Cardiac septum (tissue), 1 donor: ENCODE measurements at regions of chr9 and their contacts with region 1.

Region 1: DNA sequence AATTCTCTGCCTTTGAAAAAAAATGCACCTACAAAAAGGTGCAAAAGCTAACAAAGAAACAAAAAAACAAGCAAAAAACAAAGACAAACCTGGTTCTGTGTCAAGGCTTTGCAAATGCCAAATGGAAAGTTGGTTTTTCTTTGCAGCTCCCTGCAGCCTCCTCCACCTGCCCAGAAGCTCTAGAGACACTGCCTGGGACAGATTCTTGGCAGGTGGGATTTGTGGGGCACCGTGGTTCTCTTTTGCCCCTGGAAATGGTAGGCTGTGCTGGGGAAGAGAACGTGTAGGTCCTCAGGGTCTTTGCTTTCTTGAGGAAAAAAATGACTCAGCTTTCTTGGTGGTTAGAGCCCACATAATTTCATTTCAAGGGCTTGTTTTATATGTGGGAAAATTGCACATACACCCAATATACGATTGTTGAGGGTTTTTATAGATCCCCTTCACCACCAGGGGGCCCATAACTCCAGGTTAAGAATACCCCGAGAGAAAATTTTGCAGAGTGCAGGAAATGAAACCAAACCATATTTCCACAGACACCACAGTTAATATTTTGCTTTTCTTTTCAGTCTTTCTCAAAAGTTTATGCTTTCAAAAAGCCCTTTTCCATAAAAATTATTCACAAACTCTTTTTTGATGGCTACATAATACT is 58.7 kb downstream of the NXNL2 start:
- DNase-seq: no peak

Region 2: DNA sequence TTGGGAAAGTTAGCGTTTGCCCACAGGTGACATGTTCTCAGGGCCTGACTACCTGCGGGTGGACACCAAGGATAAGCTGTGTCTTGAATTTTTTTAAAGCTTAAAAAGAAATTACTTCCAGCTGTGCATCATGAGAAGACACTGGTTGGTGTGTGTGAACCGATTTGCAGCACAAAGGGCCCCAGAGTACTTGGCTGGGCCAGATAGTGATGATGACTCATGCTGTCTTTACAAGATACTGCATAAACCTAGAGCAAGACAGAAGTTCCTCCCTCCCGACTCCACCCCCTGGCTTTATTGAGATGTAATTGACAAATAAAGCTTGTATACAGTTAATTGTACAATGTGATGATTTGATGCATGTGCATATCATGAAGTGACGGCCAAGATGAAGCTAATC is 154.1 kb after region 1 on chr9:
- intact Hi-C with region 1: no loop called
- DNase-seq: no peak

Region 3: GRCh38 chr9:89281106-89281505 is 687.4 kb after region 1 on chr9:
- intact Hi-C with region 1: loop called (anchors 5 kb)
- DNase-seq: no peak